Activated B cell treated with CpG ODN at 0.5 μM for 24 hours (primary cell): ENCODE measurements at regions of chr13 and their contacts with region 1.

Region 1: GRCh38 chr13:76903544-76904162 is 17.4 kb upstream of the KCTD12 start:
- DNase-seq: no peak
- ATAC-seq: peak; percentile 89
- H3K4me3 Mint-ChIP-seq: no peak overlapping the region
- H3K27ac Mint-ChIP-seq: no peak overlapping the region
- H3K4me1 Mint-ChIP-seq: no peaks in the 10 kb centered on the region
- H3K27me3 Mint-ChIP-seq: peaks cover 17% of the 10 kb centered on the region
- CTCF ChIP-seq: peak; percentile 83

Region 2: GRCh38 chr13:75691183-75691582 is 1212.5 kb before region 1 on chr13:
- CTCF ChIA-PET with region 1: interaction called, 46 read pairs
- POLR2A ChIA-PET with region 1: no interaction called
- intact Hi-C with region 1: loop called (anchors 1 kb)
- DNase-seq: no peak
- ATAC-seq: no peak
- H3K4me3 Mint-ChIP-seq: no peak overlapping the region
- H3K27ac Mint-ChIP-seq: no peak overlapping the region
- H3K4me1 Mint-ChIP-seq: no peaks in the 10 kb centered on the region
- H3K27me3 Mint-ChIP-seq: no peaks in the 10 kb centered on the region
- CTCF ChIP-seq: no peak

Region 3: GRCh38 chr13:75870397-75870903 is 1033.2 kb before region 1 on chr13:
- CTCF ChIA-PET with region 1: interaction called, 49 read pairs
- POLR2A ChIA-PET with region 1: no interaction called
- intact Hi-C with region 1: loop called (anchors 1 kb)
- DNase-seq: no peak
- ATAC-seq: no peak
- H3K4me3 Mint-ChIP-seq: peak overlapping the region; percentile 25
- H3K27ac Mint-ChIP-seq: no peak overlapping the region
- H3K4me1 Mint-ChIP-seq: peaks cover 2% of the 10 kb centered on the region
- H3K27me3 Mint-ChIP-seq: peaks cover 13% of the 10 kb centered on the region
- CTCF ChIP-seq: no peak

Region 4: GRCh38 chr13:76473552-76474134 is 430.0 kb before region 1 on chr13:
- CTCF ChIA-PET with region 1: interaction called, 6 read pairs
- POLR2A ChIA-PET with region 1: no interaction called
- intact Hi-C with region 1: loop called (anchors 1 kb)
- DNase-seq: no peak
- ATAC-seq: peak; percentile 71
- H3K4me3 Mint-ChIP-seq: no peak overlapping the region
- H3K27ac Mint-ChIP-seq: no peak overlapping the region
- H3K4me1 Mint-ChIP-seq: no peaks in the 10 kb centered on the region
- H3K27me3 Mint-ChIP-seq: peaks cover 2% of the 10 kb centered on the region
- CTCF ChIP-seq: peak; percentile 24

Region 5: GRCh38 chr13:76822698-76823267 is 80.9 kb before region 1 on chr13:
- CTCF ChIA-PET with region 1: interaction called, 6 read pairs
- POLR2A ChIA-PET with region 1: no interaction called
- intact Hi-C with region 1: loop called (anchors 1 kb)
- DNase-seq: no peak
- ATAC-seq: no peak
- H3K4me3 Mint-ChIP-seq: no peak overlapping the region
- H3K27ac Mint-ChIP-seq: no peak overlapping the region
- H3K4me1 Mint-ChIP-seq: no peaks in the 10 kb centered on the region
- H3K27me3 Mint-ChIP-seq: peaks cover 2% of the 10 kb centered on the region
- CTCF ChIP-seq: no peak